Activated T-helper 1 cell treated with anti-CD3 and anti-CD28 coated beads, Interleukin-12 subunit alpha, Interleukin-12 subunit beta, Interleukin-2, Interleukin-4 antibody, amounts not matched to agents 30 ng/mL and 10 ng/mL and 1 ng/mL, durations not matched to agents 14 hours and 24 hours and 36 hours (primary cell): ENCODE measurements at regions of chr6 and their contacts with region 1.

Region 1: DNA sequence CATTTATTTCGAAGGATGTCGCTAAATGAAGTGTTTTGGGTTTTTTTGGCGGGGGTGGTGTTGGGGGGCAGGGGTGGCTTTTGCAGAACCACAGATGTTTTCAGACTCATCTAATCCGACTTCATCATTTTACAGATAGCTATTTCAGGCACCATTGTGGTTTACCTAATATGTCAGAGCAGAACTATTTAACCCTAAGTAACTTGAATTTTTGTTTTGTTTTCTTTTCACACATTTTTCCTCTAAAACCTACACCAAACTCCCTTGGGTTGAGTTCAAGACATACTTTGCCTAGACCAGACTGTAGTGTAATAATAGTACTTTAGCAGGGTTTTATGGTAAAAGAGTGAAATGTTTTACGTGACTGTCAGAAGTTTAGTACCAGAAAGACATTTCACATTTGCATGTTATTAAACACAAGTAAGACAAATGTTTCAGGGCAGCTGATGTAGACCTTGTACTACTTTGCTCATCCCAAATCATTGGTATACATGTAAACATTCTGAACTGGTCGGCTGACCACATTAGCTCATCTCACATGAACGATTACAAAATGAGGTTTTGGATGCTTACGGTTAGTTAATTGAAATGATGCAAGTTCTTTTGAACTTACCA is 37.7 kb downstream of the MAP3K4 start:
- DNase-seq: no peak
- H3K4me3 Mint-ChIP-seq: no peak overlapping the region
- H3K27ac Mint-ChIP-seq: peak overlapping the region; percentile 22
- H3K4me1 Mint-ChIP-seq: peaks cover 18% of the 10 kb centered on the region
- H3K27me3 Mint-ChIP-seq: no peaks in the 10 kb centered on the region

Region 2: GRCh38 chr6:161079566-161080262 is 50.4 kb after region 1 on chr6:
- intact Hi-C with region 1: loop called (anchors 2 kb)
- DNase-seq: peak; percentile 22
- H3K4me3 Mint-ChIP-seq: peak overlapping the region; percentile 28
- H3K27ac Mint-ChIP-seq: peak overlapping the region; percentile 73
- H3K4me1 Mint-ChIP-seq: no peaks in the 10 kb centered on the region
- H3K27me3 Mint-ChIP-seq: no peaks in the 10 kb centered on the region